ENCODE measurements at regions of chr1 and their contacts with region 1.

Region 1: DNA sequence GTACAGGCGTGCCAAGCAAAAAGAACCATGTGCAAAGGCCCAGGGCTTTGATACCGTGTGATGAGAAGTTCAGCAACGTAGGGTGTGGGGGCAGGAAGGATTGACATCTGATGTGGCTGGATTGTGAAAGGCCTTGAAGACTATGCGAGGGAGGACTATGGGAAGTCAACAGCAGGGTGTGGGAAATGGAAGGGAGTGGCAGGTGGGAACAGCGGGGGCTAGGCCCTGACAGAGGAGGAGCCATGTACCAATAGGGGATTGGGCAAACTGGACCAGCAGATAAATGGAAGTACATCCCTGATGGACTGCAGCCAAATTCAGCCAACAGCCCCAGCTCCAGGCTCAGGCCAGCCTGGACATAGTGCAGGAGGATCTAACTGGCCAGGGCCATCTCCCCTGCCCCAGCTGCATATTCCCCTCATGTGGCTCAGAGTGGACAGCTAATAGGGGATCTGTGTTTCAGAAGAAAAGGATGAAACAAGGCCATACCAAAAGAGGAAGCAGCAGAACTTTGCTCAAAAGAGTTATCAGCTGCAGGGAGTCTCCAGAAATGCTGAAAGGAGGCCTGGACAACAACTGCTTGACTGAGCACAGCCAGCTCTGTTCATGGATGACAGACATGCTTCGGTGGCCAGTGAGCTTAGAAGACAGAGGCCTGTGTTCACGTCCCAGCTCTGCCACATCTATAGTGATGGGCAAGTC is 140.2 kb upstream of the SGIP1 start:
- DNase-seq: no peak
- ATAC-seq: no peak

Region 2: DNA sequence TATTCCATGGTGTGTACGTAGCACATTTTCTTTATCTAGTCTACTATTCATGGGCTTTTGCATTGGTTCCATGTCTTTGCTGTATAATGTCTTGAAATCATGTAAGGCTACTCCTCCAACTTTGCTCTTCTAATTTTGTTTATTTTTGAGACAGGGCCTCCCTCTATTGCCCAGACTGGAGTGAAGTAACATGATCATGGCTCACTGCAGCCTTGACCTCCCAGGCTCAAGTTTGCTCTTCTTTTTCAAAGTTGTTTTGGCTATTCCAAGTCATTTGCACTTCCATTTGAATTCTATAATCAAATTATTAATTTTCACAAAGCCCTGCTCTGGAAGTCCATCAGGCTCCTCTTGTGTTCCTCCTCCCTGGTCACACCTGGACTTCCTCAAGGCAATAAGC is 50.1 kb after region 1 on chr1:
- intact Hi-C with region 1: loop called (anchors 5 kb)
- DNase-seq: no peak
- ATAC-seq: peak; percentile 53

Measured in sciatic nerve (tissue), 2 donors.